Activated CD8-positive, alpha-beta T cell treated with anti-CD3 and anti-CD28 coated beads, Interleukin-2, amount 10 ng/mL, durations not matched to agents 7 days and 5 days (primary cell): ENCODE measurements at regions of chr10 and their contacts with region 1.

Region 1: DNA sequence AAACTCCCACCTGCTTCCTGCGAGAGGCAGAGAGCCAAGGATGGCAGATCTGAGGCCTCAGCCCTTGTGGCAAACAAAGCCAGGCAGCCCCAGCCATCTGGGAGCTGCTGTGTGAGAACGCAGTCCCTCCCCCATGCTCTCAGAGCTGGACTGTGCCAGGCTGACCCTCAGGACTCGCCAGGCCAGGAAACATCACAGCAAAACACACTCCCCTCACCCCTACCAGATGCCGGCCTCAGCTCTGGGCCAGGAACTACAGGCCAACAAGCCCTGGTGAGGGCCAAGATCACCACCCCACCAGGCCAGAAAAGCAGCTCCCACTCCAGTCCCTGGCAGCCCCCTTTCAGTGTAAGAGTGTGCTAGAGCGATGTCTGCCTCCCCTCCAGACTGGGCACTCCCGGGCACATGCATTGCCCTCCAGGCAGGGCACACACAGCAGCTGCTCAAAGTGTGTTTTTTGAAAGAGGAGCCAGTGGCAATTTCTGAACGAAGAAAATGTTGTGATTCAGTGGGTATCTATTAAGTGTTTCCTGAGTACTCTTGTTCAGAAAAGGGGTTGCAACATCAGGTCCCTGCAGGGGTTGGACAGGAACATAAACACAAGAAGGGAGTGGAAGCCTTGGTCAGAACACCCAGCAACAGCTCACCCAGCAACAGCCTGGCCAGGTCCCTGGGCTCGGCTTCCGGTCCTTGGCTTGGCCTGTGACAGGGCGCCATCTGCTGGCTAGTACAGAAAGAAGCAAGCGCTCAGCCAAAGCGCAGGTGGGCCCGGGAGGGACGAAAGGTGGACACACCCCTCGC is 18.3 kb downstream of the LRRC20 start:
- DNase-seq: peak; percentile 92
- ATAC-seq: peak; percentile 99
- H3K4me3 Mint-ChIP-seq: no peak overlapping the region
- H3K27ac Mint-ChIP-seq: peak overlapping the region; percentile 65
- H3K4me1 Mint-ChIP-seq: peaks cover 16% of the 10 kb centered on the region
- H3K27me3 Mint-ChIP-seq: no peaks in the 10 kb centered on the region

Region 2: DNA sequence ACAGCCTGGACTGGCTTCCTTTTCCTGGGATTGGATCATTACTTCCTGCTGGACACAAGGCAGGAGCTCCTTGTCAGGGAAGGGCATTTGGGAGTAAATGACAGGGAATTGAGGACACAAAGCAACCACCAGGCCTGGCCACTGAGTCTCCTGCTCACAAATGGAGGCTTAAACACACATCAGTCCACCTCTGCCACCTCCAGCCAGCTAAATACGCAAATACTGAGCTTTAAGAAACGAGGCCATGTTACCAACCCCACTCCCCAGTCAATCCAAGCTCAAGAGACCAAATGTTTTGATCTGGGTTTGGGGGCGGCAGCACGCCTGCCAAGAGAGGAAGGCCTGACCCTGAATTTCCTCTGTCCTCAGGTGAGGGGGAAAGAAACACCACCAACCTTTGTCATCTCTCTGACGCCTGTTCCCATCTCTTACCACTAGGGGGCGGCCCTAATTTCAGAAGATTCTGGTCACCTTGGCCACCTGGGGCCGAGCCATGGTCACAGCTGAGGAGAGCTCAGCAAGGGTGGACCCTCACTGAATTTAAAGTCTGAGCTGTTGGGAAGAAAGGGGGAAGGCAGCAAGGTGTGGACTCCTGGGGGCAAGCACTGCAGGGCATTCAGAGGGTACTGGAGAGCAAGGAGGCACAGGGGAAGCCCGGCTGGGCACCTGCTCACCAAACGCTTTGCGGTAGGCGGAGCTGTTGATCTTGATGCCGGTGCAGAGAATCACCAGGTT is 248.1 kb before region 1 on chr10:
- CTCF ChIA-PET with region 1: interaction called, 13 read pairs
- POLR2A ChIA-PET with region 1: no interaction called
- DNase-seq: peak; percentile 72
- ATAC-seq: peak; percentile 78
- H3K4me3 Mint-ChIP-seq: no peak overlapping the region
- H3K27ac Mint-ChIP-seq: peak overlapping the region; percentile 53
- H3K4me1 Mint-ChIP-seq: peaks cover 24% of the 10 kb centered on the region
- H3K27me3 Mint-ChIP-seq: no peaks in the 10 kb centered on the region

Region 3: GRCh38 chr10:70227548-70228320 is 136.4 kb before region 1 on chr10:
- CTCF ChIA-PET with region 1: interaction called, 688 read pairs
- POLR2A ChIA-PET with region 1: interaction called, 13 read pairs
- DNase-seq: no peak
- ATAC-seq: no peak
- H3K4me3 Mint-ChIP-seq: no peak overlapping the region
- H3K27ac Mint-ChIP-seq: no peak overlapping the region
- H3K4me1 Mint-ChIP-seq: peaks cover 49% of the 10 kb centered on the region
- H3K27me3 Mint-ChIP-seq: no peaks in the 10 kb centered on the region

Region 4: GRCh38 chr10:70272925-70273316 is 91.2 kb before region 1 on chr10:
- CTCF ChIA-PET with region 1: interaction called, 132 read pairs
- POLR2A ChIA-PET with region 1: interaction called, 3 read pairs
- DNase-seq: no peak
- ATAC-seq: peak; percentile 81
- H3K4me3 Mint-ChIP-seq: no peak overlapping the region
- H3K27ac Mint-ChIP-seq: peak overlapping the region; percentile 23
- H3K4me1 Mint-ChIP-seq: peaks cover 16% of the 10 kb centered on the region
- H3K27me3 Mint-ChIP-seq: no peaks in the 10 kb centered on the region

Region 5: DNA sequence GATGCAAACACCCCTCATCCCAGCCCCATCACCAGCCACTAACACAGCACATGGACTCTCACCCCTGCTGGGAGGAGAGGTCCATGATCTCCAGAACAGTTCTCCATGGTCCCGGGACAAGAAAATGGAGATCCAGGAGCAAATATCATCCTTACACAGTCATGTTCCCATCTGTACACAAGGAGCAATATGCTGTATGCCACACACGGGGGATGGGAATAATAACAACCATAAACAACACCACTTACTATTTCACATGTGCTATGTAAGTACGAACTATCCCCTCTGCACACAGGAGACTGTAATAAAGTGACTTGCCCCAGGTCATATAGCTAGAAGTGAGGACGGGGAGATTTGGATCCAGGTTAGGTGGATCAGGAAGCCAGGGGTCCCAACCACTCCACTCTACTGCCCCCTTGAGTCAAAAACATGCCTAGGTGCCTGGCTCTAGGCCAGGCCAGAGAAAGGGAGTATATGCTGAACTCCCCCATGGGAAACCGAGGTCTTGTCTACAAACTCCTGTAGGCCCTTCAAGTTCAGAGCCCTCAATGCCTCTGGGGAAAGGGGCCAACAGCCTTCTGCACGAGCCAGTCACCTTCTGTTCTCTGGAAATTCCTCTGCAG is 15.8 kb before region 1 on chr10:
- CTCF ChIA-PET with region 1: interaction called, 20 read pairs
- POLR2A ChIA-PET with region 1: interaction called, 3 read pairs
- DNase-seq: peak; percentile 60
- ATAC-seq: peak; percentile 72
- H3K4me3 Mint-ChIP-seq: no peak overlapping the region
- H3K27ac Mint-ChIP-seq: no peak overlapping the region
- H3K4me1 Mint-ChIP-seq: no peaks in the 10 kb centered on the region
- H3K27me3 Mint-ChIP-seq: no peaks in the 10 kb centered on the region

Region 6: DNA sequence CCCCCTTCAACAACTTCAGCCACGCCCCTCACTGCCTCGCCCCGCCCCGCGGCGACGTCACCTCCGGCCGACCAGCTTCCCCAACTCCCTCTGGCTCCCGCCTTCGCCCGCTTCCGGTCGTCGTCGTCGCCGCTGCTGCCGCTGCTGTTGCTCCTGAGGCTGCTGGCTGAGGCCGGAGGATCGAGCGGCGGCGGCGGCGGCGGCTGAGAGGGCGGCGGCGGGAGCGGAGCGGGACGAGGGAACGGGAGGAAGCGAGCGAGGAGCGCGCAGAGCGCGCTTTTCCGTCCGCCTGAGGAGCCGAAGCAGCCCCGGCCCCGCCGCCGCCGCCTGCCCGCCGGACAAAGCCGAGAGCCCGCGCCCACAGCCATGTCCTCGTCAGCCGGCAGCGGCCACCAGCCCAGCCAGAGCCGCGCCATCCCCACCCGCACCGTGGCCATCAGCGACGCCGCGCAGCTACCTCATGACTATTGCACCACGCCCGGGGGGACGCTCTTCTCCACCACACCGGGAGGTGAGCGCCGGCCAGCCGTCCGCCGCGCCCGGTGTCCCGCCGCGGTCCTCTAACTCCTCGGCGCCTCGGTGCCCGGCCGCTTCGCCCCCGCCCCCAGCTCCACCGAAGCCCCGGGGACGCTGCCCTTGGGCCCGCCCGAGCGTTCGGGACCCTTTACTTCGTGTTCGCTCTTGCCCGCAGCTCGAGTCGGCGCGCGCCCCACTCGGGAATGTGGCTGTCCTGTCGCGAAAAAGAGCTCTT is 40.0 kb after region 1 on chr10 and contains the start of gene EIF4EBP2:
- CTCF ChIA-PET with region 1: interaction called, 11 read pairs
- POLR2A ChIA-PET with region 1: interaction called, 5 read pairs
- DNase-seq: peak; percentile 98
- ATAC-seq: peak; percentile 90
- H3K4me3 Mint-ChIP-seq: peak within 1 kb of the TSS; percentile 86
- H3K27ac Mint-ChIP-seq: peak within 1 kb of the TSS; percentile 90
- H3K4me1 Mint-ChIP-seq: peaks cover 35% of the 10 kb centered on the region
- H3K27me3 Mint-ChIP-seq: no peaks in the 10 kb centered on the region
- total RNA-seq, gene EIF4EBP2: 58.7 to 60.8 TPM